Activated CD8-positive, alpha-beta T cell treated with anti-CD3 and anti-CD28 coated beads for 36 hours (primary cell): ENCODE measurements at regions of chr1 and their contacts with region 1.

Region 1: DNA sequence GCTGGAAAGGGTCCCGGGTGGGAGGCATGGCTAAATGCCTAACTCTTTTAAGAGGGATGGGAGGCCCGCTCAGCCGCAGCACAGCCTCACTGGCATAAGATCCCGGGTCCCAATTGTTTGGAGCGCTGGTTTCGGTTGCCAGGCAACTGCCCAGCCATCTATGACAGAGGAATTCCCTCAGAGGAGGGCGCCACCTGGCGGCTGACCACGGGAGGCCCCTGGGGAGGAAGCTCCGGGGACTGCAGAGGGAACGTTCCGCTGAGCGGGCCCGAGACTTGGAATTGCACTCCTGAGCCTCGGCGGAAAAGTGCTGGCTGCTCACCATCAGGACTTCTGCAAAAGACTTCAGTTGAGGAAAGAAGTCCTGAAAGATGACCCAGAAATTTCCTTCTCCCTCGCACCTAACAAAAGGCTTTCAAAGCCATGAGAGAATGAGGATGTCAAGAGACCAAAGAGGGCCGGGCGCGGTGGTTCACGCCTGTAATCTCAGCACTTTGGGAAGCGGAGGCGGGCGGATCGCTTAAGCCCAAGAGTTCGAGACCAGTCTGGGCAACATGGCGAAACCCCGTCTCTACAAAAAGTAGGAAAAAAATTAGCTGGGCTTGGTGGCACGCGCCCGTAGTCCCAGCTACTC is 1.1 kb upstream of the ELAPOR1 start:
- DNase-seq: peak; percentile 92
- ATAC-seq: peak; percentile 45
- H3K4me3 Mint-ChIP-seq: peak overlapping the region; percentile 77
- H3K27ac Mint-ChIP-seq: peak overlapping the region; percentile 62
- H3K4me1 Mint-ChIP-seq: peaks cover 46% of the 10 kb centered on the region
- H3K27me3 Mint-ChIP-seq: peaks cover 2% of the 10 kb centered on the region
- CTCF ChIP-seq: peak; percentile 96

Region 2: GRCh38 chr1:108963052-108963686 is 149.6 kb before region 1 on chr1 and contains the start of gene CLCC1:
- CTCF ChIA-PET with region 1: interaction called, 3 read pairs
- POLR2A ChIA-PET with region 1: no interaction called
- intact Hi-C with region 1: loop called (anchors 10 kb)
- DNase-seq: peak; percentile 96
- ATAC-seq: peak; percentile 97
- H3K4me3 Mint-ChIP-seq: peak within 1 kb of the TSS; percentile 81
- H3K27ac Mint-ChIP-seq: peak within 1 kb of the TSS; percentile 88
- H3K4me1 Mint-ChIP-seq: peaks cover 26% of the 10 kb centered on the region
- H3K27me3 Mint-ChIP-seq: peaks cover 2% of the 10 kb centered on the region
- CTCF ChIP-seq: no peak
- total RNA-seq, gene CLCC1: 14.3 to 15.2 TPM

Region 3: DNA sequence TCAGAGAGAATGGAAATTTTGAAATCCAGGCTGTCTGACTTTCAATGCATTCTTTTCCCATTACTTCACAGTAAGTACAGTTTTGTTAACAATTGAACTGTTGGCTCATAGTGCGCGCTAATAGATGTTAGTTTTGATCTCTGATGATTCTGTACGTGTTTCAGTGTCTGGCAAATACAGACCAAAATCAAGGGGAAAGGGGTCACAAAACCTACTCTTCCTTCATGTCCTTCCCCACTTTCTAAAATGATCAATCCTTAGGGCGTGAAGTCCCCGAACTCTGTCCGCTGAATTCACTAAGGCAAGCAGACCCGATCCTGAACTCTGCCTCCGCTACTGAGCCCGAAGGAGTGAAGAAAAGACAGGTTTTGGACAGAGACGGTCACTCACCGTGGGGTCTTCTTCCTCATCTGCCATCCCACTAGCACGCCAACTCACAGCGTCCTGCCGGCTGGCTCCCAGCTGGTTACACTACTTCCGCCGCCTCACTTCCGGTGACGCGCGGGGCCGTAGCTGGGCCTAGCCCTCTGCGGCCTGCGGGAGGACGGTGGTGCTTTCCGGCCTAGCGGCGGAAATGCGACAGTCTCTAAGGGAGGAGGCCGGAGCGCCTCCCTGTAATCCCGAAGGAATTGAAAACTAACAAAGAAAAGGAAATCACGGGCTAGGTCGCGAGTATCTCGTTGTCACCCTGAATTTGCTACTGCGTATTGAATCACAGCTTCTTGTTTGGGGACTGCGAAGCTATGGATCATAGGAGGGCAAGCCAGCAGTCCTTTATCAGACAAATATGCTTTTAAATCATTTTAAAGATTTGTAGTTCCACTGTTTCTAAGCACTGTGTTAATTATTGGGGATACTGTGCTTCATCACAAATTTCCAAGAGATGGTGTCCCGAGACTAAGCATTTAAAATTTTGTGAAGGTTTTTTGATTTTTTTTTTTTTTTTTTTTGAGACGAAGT is 37.0 kb before region 1 on chr1 and contains the start of gene TAF13:
- CTCF ChIA-PET with region 1: interaction called, 11 read pairs
- POLR2A ChIA-PET with region 1: no interaction called
- intact Hi-C with region 1: no loop called
- DNase-seq: peak; percentile 92
- ATAC-seq: peak; percentile 99
- H3K4me3 Mint-ChIP-seq: peak within 1 kb of the TSS; percentile 93
- H3K27ac Mint-ChIP-seq: peak within 1 kb of the TSS; percentile 96
- H3K4me1 Mint-ChIP-seq: peaks cover 15% of the 10 kb centered on the region
- H3K27me3 Mint-ChIP-seq: no peaks in the 10 kb centered on the region
- CTCF ChIP-seq: no peak
- total RNA-seq, gene TAF13: 18.5 to 19.0 TPM

Region 4: DNA sequence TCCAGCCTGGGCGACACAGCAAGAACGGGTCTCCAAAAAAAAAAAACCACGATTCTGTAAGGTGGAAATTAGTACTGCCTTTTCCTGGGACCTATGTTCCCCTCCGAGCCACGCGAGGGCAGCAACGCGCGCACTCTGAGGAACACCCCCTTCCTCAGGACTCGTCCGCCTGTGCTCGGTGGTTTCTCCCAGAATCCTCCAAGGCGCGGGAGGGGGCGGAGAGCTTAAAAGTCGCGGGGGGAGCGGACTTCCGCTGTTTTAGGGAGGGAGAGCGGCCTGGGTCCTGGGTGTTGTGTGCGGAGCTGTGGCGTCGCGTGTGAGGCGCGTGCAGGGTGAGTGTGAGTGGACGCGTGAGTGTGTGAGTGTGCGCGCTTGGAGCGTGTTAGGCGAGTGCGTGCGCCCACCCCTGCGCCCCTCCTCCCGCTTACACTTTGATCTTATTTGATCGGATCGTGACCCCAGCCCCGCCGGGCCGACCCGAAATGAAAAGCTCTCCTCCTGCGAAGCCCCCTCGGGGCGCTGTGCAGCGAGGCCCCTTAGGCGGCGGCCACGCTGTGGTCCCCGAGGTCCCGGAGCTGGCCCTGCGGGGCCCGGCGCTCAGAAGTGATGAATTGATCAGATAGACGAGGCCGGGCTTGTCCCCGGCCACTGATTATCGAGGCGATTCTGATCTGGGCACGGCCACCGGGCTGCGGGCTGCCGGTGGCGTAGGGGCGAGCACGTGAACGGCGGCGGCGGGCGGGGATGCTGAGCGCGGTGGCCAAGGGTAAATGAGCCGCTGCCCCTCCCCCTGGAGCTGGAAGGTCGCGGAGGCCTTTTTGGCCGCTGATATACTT is 12.6 kb before region 1 on chr1:
- CTCF ChIA-PET with region 1: interaction called, 95 read pairs
- POLR2A ChIA-PET with region 1: interaction called, 98 read pairs
- intact Hi-C with region 1: no loop called
- DNase-seq: peak; percentile 98
- ATAC-seq: peak; percentile 94
- H3K4me3 Mint-ChIP-seq: peak overlapping the region; percentile 98
- H3K27ac Mint-ChIP-seq: peak overlapping the region; percentile 98
- H3K4me1 Mint-ChIP-seq: peaks cover 5% of the 10 kb centered on the region
- H3K27me3 Mint-ChIP-seq: no peaks in the 10 kb centered on the region
- CTCF ChIP-seq: peak; percentile 73

Region 5: DNA sequence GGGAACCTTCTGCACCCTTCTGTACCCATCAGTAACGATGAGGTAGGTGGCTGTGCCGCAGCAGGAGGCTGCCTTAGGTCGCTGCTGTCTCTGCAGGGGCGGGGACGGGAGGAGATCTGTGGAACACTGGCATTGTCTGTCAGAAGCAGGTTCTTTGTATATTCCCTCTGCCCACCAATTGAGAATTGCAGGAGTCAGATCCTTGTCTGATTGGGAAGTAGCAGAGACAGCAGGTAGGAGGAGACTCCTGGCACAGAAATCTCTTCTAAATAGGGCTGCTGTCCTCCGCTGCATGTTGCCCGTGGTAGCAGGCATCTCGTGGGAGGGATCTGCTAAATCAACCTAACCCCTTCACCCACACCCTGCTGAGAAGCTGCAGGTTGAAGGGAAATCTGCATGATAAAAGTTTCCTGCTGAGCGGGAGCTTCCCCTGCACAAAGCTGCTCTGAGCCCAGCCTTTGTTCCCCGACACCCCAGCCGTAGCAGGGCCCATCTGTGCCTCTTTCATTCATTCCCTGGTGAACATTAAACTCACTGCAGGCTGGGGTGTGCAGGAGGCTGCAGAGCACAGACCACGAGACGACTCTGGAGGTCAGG is 116.9 kb after region 1 on chr1:
- CTCF ChIA-PET with region 1: no interaction called
- POLR2A ChIA-PET with region 1: no interaction called
- intact Hi-C with region 1: no loop called
- DNase-seq: no peak
- ATAC-seq: no peak
- H3K4me3 Mint-ChIP-seq: no peak overlapping the region
- H3K27ac Mint-ChIP-seq: no peak overlapping the region
- H3K4me1 Mint-ChIP-seq: peaks cover 13% of the 10 kb centered on the region
- H3K27me3 Mint-ChIP-seq: no peaks in the 10 kb centered on the region
- CTCF ChIP-seq: no peak

Region 6: GRCh38 chr1:109426278-109427170 is 313.8 kb after region 1 on chr1 and contains the start of gene PSMA5:
- CTCF ChIA-PET with region 1: no interaction called
- POLR2A ChIA-PET with region 1: no interaction called
- intact Hi-C with region 1: loop called (anchors 10 kb)
- DNase-seq: peak; percentile 98
- ATAC-seq: peak; percentile 94
- H3K4me3 Mint-ChIP-seq: peak within 1 kb of the TSS; percentile 93
- H3K27ac Mint-ChIP-seq: peak within 1 kb of the TSS; percentile 96
- H3K4me1 Mint-ChIP-seq: peaks cover 28% of the 10 kb centered on the region
- H3K27me3 Mint-ChIP-seq: no peaks in the 10 kb centered on the region
- CTCF ChIP-seq: no peak
- total RNA-seq, gene PSMA5: 192 to 210 TPM